Activated CD4-positive, alpha-beta memory T cell treated with anti-CD3 and anti-CD28 coated beads for 36 hours (primary cell): ENCODE measurements at regions of chr3 and their contacts with region 1.

Region 1: GRCh38 chr3:130048726-130049125 is 32.9 kb upstream of the ALG1L2 start:
- DNase-seq: no peak
- H3K4me3 Mint-ChIP-seq: no peak overlapping the region
- H3K27ac Mint-ChIP-seq: no peak overlapping the region
- H3K4me1 Mint-ChIP-seq: no peaks in the 10 kb centered on the region
- H3K27me3 Mint-ChIP-seq: no peaks in the 10 kb centered on the region

Region 2: DNA sequence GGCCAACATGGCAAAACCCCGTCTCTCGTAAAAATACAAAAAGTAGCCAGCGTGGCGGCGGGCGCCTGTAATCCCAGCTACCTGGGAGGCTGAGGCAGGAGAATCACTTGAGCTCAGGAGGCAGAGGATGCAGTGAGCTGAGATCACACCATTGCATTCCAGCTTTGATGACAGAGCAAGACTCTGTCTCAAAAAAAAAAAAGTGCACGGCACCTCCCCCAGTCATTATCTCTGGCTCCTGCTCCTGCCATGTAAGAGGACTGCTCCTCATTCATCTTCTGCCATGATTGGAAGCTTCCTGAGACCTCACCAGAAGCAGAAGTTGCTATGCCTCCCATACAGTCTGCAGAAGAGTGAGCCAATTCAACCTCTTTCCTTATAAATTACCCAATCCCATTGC is 28.9 kb after region 1 on chr3:
- CTCF ChIA-PET with region 1: no interaction called
- POLR2A ChIA-PET with region 1: no interaction called
- intact Hi-C with region 1: no loop called
- DNase-seq: no peak
- H3K4me3 Mint-ChIP-seq: no peak overlapping the region
- H3K27ac Mint-ChIP-seq: no peak overlapping the region
- H3K4me1 Mint-ChIP-seq: no peaks in the 10 kb centered on the region
- H3K27me3 Mint-ChIP-seq: peaks cover 2% of the 10 kb centered on the region

Region 3: GRCh38 chr3:130088061-130088460 is 39.3 kb after region 1 on chr3:
- CTCF ChIA-PET with region 1: no interaction called
- POLR2A ChIA-PET with region 1: no interaction called
- intact Hi-C with region 1: loop called (anchors 2 kb)
- DNase-seq: no peak
- H3K4me3 Mint-ChIP-seq: no peak overlapping the region
- H3K27ac Mint-ChIP-seq: no peak overlapping the region
- H3K4me1 Mint-ChIP-seq: peaks cover 1% of the 10 kb centered on the region
- H3K27me3 Mint-ChIP-seq: no peaks in the 10 kb centered on the region